ENCODE measurements at regions of chr1 and their contacts with region 1.

Region 1: GRCh38 chr1:100459358-100460114 is 78.4 kb upstream of the GPR88 start:
- DNase-seq: peak; percentile 26
- H3K4me3 ChIP-seq: no peak overlapping the region
- CTCF ChIP-seq: peak; percentile 89

Region 2: DNA sequence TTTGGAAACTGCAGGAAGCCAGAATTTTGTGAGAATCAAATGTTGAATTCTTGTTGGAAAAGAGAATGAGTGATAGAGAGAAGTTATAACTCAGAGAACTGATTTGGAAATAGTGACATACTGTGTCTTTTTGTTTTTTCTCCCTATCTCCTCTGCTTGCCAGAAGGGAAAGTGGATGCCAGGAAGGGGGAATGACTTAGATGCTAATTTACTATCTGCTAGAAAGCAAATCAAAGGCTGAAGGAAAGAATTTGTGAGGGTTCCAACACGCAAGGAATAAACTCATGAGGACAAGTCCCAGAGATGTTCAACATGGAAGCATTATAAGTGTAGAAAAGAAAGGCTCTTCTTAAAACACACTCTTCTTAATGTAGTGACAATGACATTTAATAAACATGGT is 260.9 kb before region 1 on chr1:
- CTCF ChIA-PET with region 1: no interaction called
- POLR2A ChIA-PET with region 1: no interaction called
- DNase-seq: no peak
- H3K4me3 ChIP-seq: no peak overlapping the region
- CTCF ChIP-seq: no peak

Region 3: DNA sequence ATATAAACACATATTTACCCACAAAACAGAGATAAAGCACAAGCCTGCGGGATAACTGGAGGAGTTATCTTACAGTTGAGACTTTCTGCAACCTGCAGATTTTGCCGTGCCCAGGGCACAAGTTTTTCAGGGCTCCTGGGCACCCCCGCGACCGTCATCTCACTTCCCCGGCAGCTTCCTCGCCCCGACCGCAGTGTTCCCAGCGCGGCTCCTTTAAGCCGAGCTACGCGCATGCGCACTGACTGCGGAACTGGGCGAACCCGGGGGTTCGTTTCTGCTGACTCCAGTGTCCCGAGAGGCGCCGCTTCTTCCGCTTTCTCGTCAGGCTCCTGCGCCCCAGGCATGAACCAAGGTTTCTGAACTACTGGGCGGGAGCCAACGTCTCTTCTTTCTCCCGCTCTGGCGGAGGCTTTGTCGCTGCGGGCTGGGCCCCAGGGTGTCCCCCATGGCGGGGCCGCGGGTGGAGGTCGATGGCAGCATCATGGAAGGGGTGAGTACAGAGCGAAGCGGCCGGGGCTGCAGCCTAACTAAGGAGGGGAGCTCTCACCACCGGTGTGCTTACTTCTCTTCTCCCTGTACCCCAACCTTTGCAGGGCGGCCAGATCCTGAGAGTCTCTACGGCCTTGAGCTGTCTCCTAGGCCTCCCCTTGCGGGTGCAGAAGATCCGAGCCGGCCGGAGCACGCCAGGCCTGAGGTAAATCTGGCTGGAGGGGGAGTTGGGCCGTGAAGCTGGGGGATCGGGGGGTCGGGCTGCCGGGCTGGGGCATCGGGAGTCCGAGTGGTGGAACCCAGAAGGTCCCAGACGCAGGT is 193.4 kb before region 1 on chr1 and contains the start of gene RTCA:
- CTCF ChIA-PET with region 1: interaction called, 16 read pairs
- POLR2A ChIA-PET with region 1: no interaction called
- DNase-seq: peak; percentile 54
- H3K4me3 ChIP-seq: peak within 1 kb of the TSS; percentile 90
- CTCF ChIP-seq: no peak

Region 4: GRCh38 chr1:100362821-100363466 is 96.6 kb before region 1 on chr1:
- CTCF ChIA-PET with region 1: no interaction called
- POLR2A ChIA-PET with region 1: no interaction called
- DNase-seq: no peak
- H3K4me3 ChIP-seq: no peak overlapping the region
- CTCF ChIP-seq: no peak

Region 5: DNA sequence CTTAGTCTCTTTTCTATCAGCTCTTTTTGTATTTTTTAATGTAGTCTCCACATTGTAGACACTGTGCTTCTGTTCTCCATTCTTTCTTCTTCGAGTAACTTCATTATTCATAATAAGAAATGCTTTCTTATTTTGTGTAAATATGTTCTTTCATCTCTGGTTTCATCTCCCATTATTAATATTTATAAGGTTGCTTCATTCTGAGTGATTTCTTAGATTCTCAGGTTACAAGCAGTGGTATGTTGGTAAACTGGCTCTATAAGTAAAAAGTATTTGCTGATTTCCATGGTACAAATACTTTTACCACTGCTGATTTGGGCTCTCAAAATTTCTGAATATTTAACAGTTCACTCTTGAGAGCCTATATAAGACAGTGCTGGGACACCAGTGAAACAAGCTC is 26.0 kb before region 1 on chr1:
- CTCF ChIA-PET with region 1: interaction called, 31 read pairs
- POLR2A ChIA-PET with region 1: no interaction called
- DNase-seq: no peak
- H3K4me3 ChIP-seq: no peak overlapping the region
- CTCF ChIP-seq: no peak

Region 6: DNA sequence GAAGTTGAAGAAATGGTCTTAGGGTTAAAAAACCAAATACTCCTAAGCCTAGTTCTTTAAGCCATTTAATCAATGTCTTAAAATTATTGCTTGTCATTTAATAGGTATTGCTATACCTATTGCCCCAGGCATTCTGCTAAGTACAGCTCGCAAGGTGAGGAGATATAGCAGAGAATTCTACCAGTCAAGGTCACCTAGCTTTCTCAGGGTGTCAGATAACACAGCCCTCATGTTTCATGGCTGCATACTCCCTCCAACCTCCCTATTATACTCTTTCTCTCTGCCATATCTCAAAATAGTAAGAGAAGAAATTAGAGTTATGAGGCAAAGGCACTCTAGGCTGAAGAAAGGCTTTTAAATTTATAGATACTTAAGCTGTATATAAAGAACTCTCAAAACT is 10.0 kb after region 1 on chr1:
- CTCF ChIA-PET with region 1: interaction called, 28 read pairs
- POLR2A ChIA-PET with region 1: no interaction called
- DNase-seq: no peak
- H3K4me3 ChIP-seq: no peak overlapping the region
- CTCF ChIP-seq: no peak

Region 7: DNA sequence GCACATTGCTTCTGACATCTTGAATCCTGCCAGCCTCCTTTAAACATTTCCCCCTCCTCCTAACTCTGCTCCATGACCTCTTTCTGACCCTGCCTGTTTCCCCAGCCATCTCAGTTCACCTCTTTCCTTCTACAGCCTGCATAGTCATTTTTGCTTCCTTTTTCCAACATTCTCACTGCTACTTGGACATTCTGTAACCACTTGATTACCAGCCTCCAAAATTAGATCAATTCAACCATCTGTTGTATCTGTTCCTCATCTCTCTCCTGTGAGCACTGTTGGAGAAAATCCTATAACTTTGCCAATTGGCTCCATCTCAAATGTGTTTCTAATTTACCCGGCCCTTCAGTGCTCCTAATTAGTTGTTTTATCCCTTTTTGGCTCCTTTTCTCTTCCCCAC is 50.9 kb after region 1 on chr1:
- CTCF ChIA-PET with region 1: interaction called, 11 read pairs
- POLR2A ChIA-PET with region 1: no interaction called
- DNase-seq: no peak
- H3K4me3 ChIP-seq: no peak overlapping the region
- CTCF ChIP-seq: no peak

Region 8: GRCh38 chr1:100866041-100866900 is 406.7 kb after region 1 on chr1:
- CTCF ChIA-PET with region 1: interaction called, 700 read pairs
- POLR2A ChIA-PET with region 1: interaction called, 4 read pairs
- DNase-seq: no peak
- H3K4me3 ChIP-seq: no peak overlapping the region
- CTCF ChIP-seq: peak; percentile 42

Measured in AG04449 (cell line).